ENCODE measurements at regions of chr3 and their contacts with region 1.

Region 1: GRCh38 chr3:111668912-111669488 is 73.9 kb upstream of the ZBED2 start:
- DNase-seq: no peak
- ATAC-seq: peak; percentile 45
- H3K4me3 Mint-ChIP-seq: no peak overlapping the region
- H3K27ac Mint-ChIP-seq: peak overlapping the region; percentile 74
- H3K4me1 Mint-ChIP-seq: peaks cover 41% of the 10 kb centered on the region
- H3K27me3 Mint-ChIP-seq: no peaks in the 10 kb centered on the region
- CTCF ChIP-seq: peak; percentile 46

Region 2: DNA sequence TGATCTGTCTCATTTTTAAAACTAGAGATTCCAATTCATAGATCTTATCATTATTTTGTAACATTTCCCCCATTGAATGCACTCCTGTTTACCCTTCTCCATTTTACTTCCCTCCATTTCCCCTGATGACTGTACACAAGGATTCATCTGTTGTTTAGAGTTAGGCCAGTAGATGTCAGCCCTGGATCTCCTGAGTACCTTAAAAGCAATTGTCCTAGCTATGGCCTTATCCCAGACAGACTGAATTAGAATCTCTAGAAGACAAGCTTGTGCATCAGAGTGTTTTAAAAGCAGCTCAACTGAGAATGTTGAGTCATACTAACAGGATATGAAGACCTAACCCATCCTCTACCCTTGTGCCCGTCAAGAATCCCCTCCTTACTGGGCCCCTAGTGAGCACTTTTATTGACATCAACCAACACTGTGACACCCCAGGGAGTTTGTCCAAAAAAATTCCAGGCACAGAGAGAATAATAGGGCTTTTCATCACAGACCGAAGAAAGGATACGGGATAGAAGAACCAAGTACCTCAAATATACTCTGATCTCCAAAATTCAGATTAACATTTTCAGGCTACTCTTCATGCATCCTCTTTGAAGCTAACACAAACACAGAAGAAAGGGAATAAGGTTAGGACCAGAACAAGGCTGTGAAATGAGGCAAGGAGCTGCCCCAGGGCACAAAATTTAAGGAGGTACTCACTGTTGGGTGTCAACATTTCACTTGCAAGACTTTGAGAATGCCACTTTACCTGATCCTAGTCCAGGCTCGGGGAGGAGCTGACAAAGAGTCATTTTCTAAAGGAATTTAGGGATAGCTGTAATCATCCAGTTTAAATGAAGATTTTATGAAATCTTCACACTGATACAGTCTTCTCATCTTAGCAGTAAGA is 91.0 kb before region 1 on chr3:
- CTCF ChIA-PET with region 1: interaction called, 31 read pairs
- POLR2A ChIA-PET with region 1: interaction called, 8 read pairs
- intact Hi-C with region 1: loop called (anchors 1 kb)
- DNase-seq: no peak
- ATAC-seq: peak; percentile 93
- H3K4me3 Mint-ChIP-seq: no peak overlapping the region
- H3K27ac Mint-ChIP-seq: peak overlapping the region; percentile 64
- H3K4me1 Mint-ChIP-seq: peaks cover 33% of the 10 kb centered on the region
- H3K27me3 Mint-ChIP-seq: no peaks in the 10 kb centered on the region
- CTCF ChIP-seq: no peak

Region 3: GRCh38 chr3:111691293-111691909 is 22.4 kb after region 1 on chr3:
- CTCF ChIA-PET with region 1: interaction called, 18 read pairs
- POLR2A ChIA-PET with region 1: interaction called, 11 read pairs
- intact Hi-C with region 1: loop called (anchors 1 kb)
- DNase-seq: no peak
- ATAC-seq: peak; percentile 45
- H3K4me3 Mint-ChIP-seq: no peak overlapping the region
- H3K27ac Mint-ChIP-seq: no peak overlapping the region
- H3K4me1 Mint-ChIP-seq: peaks cover 34% of the 10 kb centered on the region
- H3K27me3 Mint-ChIP-seq: no peaks in the 10 kb centered on the region
- CTCF ChIP-seq: no peak

Region 4: GRCh38 chr3:111967651-111968274 is 298.8 kb after region 1 on chr3:
- CTCF ChIA-PET with region 1: interaction called, 4 read pairs
- POLR2A ChIA-PET with region 1: no interaction called
- intact Hi-C with region 1: loop called (anchors 1 kb)
- DNase-seq: peak; percentile 39
- ATAC-seq: peak; percentile 90
- H3K4me3 Mint-ChIP-seq: peak overlapping the region; percentile 4
- H3K27ac Mint-ChIP-seq: no peak overlapping the region
- H3K4me1 Mint-ChIP-seq: peaks cover 5% of the 10 kb centered on the region
- H3K27me3 Mint-ChIP-seq: no peaks in the 10 kb centered on the region
- CTCF ChIP-seq: peak; percentile 97

Region 5: DNA sequence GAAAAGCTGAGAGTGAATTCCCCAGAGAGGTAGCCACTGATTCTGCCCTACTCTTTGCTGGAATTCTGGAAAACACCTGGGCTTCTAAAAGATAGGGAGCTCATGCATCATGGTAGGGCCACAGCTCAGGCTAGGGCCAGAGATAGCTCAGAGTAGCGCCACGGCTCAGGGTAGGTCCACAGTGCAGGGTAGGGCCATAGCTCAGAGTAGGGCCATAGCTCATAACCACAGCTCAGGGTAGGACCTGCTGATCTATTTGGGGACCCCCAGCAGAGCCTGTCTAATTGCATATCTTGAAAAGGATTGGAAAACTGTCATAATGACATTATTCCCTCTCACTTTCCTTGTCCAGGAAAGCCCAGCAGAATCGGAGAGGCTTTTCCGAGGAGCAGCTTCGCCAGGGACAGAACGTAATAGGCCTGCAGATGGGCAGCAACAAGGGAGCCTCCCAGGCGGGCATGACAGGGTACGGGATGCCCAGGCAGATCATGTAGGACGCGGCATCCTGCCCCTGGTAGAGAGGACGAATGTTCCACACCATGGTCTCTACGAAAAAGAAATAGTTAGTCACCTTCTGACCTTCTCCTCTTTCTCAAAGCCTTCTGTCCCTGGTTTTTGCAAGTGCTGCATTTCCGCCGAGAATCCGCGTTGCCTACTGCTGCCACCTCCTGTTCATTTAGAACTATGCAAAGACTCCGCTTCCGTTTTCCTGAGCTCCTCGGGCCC is 344.2 kb after region 1 on chr3:
- CTCF ChIA-PET with region 1: interaction called, 34 read pairs
- POLR2A ChIA-PET with region 1: no interaction called
- intact Hi-C with region 1: loop called (anchors 1 kb)
- DNase-seq: peak; percentile 21
- ATAC-seq: peak; percentile 82
- H3K4me3 Mint-ChIP-seq: peak overlapping the region; percentile 21
- H3K27ac Mint-ChIP-seq: no peak overlapping the region
- H3K4me1 Mint-ChIP-seq: peaks cover 16% of the 10 kb centered on the region
- H3K27me3 Mint-ChIP-seq: no peaks in the 10 kb centered on the region
- CTCF ChIP-seq: no peak

Region 6: GRCh38 chr3:112437146-112438022 is 768.4 kb after region 1 on chr3:
- CTCF ChIA-PET with region 1: no interaction called
- POLR2A ChIA-PET with region 1: no interaction called
- intact Hi-C with region 1: no loop called
- DNase-seq: no peak
- ATAC-seq: peak; percentile 84
- H3K4me3 Mint-ChIP-seq: no peak overlapping the region
- H3K27ac Mint-ChIP-seq: no peak overlapping the region
- H3K4me1 Mint-ChIP-seq: peaks cover 58% of the 10 kb centered on the region
- H3K27me3 Mint-ChIP-seq: no peaks in the 10 kb centered on the region
- CTCF ChIP-seq: no peak

Measured in activated B cell treated with CpG ODN at 0.5 μM for 24 hours (primary cell).